ENCODE measurements at regions of chr4 and their contacts with region 1.

Region 1: DNA sequence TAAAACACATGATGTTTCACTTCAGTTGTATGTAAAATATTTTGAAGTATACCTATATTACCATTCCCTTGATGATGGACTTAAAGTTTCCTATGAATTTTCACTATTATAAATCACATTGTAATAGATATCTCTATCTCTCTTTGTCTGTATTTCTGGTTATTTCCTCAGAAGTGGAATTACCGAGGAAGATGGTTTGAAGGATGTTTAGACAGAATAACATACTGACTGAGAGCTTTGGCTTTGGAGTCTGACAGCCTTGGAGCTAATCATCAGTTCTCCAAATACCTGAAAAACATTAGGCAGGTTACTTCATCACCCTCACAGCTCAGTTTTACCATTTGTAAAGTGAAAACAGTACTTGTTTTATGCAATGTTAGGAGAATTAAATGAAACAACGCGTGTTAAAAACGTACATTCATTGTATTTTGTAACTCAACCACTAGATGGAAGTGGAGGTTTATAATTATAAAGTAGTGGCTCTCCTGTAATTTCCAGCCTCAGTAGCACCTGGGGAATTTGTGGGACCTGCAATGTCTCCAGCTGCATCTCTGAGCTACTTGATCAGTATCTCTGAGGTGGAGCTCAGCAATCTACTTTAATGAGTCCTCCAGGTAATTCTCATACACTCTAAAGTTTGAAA is 14.3 kb downstream of the JCHAIN start:
- DNase-seq: no peak
- ATAC-seq: peak; percentile 67
- H3K4me3 Mint-ChIP-seq: no peak overlapping the region
- H3K27ac Mint-ChIP-seq: no peak overlapping the region
- H3K4me1 Mint-ChIP-seq: peaks cover 5% of the 10 kb centered on the region
- H3K27me3 Mint-ChIP-seq: no peaks in the 10 kb centered on the region
- CTCF ChIP-seq: no peak

Region 2: GRCh38 chr4:70000711-70001110 is 651.3 kb before region 1 on chr4:
- CTCF ChIA-PET with region 1: no interaction called
- POLR2A ChIA-PET with region 1: no interaction called
- intact Hi-C with region 1: no loop called
- DNase-seq: no peak
- ATAC-seq: no peak
- H3K4me3 Mint-ChIP-seq: no peak overlapping the region
- H3K27ac Mint-ChIP-seq: no peak overlapping the region
- H3K4me1 Mint-ChIP-seq: no peaks in the 10 kb centered on the region
- H3K27me3 Mint-ChIP-seq: no peaks in the 10 kb centered on the region
- CTCF ChIP-seq: no peak

Region 3: DNA sequence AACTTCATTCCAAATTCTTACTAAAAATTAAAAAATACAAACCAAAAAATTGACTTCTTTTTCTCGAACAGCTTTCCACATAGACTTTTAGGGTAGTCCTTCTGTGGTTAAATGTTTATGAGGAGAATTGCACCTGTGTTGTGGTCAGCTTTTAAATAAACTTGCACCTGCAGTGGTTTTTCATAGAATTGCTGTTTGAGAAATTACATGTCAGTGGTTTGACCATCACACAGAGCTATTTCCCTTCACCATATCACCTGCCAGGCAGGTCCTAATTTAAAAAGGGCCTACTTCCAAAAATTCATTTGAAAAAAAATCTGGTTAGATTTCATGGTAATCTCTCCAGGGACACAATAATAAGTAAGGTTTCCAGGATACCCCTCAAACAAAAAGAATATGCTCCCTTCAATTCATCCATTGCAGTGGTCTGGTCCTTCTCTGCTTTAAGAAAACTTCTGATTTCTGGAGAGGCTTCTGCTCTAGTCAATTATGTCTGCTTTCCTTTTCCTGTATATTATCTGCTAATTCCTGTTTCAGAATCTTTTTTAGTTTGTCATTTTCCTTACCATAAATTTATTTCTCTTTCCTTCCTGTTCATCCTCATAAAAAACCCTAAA is 26.5 kb after region 1 on chr4:
- CTCF ChIA-PET with region 1: interaction called, 10 read pairs
- POLR2A ChIA-PET with region 1: interaction called, 5 read pairs
- intact Hi-C with region 1: no loop called
- DNase-seq: no peak
- ATAC-seq: no peak
- H3K4me3 Mint-ChIP-seq: no peak overlapping the region
- H3K27ac Mint-ChIP-seq: peak overlapping the region; percentile 53
- H3K4me1 Mint-ChIP-seq: peaks cover 56% of the 10 kb centered on the region
- H3K27me3 Mint-ChIP-seq: no peaks in the 10 kb centered on the region
- CTCF ChIP-seq: no peak

Region 4: GRCh38 chr4:70734168-70734954 is 82.4 kb after region 1 on chr4:
- CTCF ChIA-PET with region 1: interaction called, 9 read pairs
- POLR2A ChIA-PET with region 1: interaction called, 3 read pairs
- intact Hi-C with region 1: loop called (anchors 1 kb)
- DNase-seq: no peak
- ATAC-seq: peak; percentile 96
- H3K4me3 Mint-ChIP-seq: peak overlapping the region; percentile 78
- H3K27ac Mint-ChIP-seq: peak overlapping the region; percentile 85
- H3K4me1 Mint-ChIP-seq: peaks cover 52% of the 10 kb centered on the region
- H3K27me3 Mint-ChIP-seq: no peaks in the 10 kb centered on the region
- CTCF ChIP-seq: no peak

Region 5: DNA sequence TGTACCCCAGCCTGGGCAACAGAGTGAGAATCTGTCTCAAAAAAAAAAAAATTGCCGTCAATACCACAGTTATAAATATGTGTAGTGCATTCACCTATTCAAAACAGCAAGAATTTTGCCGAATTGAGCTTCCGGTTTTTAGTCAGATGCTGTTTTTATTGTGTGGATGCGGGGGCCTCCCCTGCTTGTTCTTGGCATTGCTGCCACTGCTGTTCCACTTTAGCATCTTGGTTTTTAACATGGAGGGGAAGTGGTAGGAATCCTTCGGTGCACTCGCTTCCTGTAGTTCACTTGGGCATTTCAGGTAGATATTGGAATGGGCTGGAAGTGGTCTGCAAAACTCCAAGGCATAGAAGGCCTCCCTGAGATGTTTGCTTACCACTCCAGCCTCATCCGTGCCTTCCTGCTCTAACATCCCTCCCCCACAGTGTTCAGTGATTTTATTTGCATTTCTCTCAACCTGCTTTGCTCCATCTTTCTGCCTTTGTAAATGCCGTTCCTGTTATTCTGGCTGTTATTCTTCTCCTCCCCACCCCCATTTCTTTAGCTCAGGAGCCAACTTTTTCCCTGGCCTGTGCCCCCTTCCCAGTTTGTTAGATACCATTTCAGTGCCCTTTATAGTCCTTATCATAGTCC is 275.6 kb after region 1 on chr4:
- CTCF ChIA-PET with region 1: no interaction called
- POLR2A ChIA-PET with region 1: no interaction called
- intact Hi-C with region 1: loop called (anchors 2 kb)
- DNase-seq: no peak
- ATAC-seq: peak; percentile 45
- H3K4me3 Mint-ChIP-seq: peak overlapping the region; percentile 33
- H3K27ac Mint-ChIP-seq: peak overlapping the region; percentile 68
- H3K4me1 Mint-ChIP-seq: peaks cover 51% of the 10 kb centered on the region
- H3K27me3 Mint-ChIP-seq: no peaks in the 10 kb centered on the region
- CTCF ChIP-seq: no peak

Region 6: DNA sequence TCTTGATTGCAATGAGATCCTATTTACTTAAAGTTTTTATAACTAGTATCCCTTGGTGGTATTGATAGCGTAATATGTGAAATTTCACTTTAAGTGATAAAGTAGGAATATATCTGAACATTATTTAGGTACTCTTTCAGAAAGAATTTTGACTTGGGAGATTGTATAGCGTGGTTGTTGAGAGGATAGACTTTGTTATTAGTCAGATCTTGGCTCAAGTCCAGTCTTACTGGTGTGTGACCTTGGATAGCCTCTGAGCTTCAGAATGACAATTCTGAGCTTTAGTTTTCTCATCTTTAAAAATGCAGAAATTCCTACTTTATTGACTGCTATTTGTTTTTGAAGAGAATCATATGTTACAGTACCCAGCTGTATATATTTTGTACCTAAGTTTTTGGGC is 374.1 kb after region 1 on chr4:
- CTCF ChIA-PET with region 1: interaction called, 3 read pairs
- POLR2A ChIA-PET with region 1: no interaction called
- intact Hi-C with region 1: loop called (anchors 2 kb)
- DNase-seq: no peak
- ATAC-seq: no peak
- H3K4me3 Mint-ChIP-seq: no peak overlapping the region
- H3K27ac Mint-ChIP-seq: peak overlapping the region; percentile 21
- H3K4me1 Mint-ChIP-seq: peaks cover 3% of the 10 kb centered on the region
- H3K27me3 Mint-ChIP-seq: no peaks in the 10 kb centered on the region
- CTCF ChIP-seq: no peak

Region 7: DNA sequence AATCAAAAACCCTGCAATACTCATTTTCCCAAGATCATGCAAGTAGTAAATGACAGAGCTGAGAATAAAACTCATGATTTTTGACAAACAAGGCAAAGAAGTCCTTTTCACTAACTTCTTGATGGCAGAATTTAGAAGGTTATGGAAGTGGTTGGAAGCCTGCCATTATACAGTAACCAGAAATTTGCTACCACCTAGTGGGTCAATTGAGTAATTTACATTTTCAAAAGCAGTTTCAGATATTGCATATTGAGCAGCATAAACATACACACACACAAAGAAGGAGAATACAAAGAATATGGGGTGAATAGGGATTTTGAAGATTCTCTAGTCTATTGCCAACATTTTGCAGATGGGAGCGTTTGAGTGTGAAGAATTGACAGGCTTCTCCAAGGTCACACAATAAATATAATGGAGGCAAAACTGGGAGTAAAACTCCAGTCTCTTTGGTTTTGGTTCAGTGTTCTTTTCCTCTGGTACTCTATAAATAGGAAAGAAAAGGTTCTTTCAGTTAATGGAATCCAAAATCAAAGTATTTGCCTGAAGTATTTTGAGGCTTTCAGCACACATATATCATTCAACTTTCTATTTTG is 1061.7 kb after region 1 on chr4:
- CTCF ChIA-PET with region 1: interaction called, 7 read pairs
- POLR2A ChIA-PET with region 1: no interaction called
- intact Hi-C with region 1: loop called (anchors 1 kb)
- DNase-seq: no peak
- ATAC-seq: no peak
- H3K4me3 Mint-ChIP-seq: no peak overlapping the region
- H3K27ac Mint-ChIP-seq: no peak overlapping the region
- H3K4me1 Mint-ChIP-seq: no peaks in the 10 kb centered on the region
- H3K27me3 Mint-ChIP-seq: no peaks in the 10 kb centered on the region
- CTCF ChIP-seq: no peak

Measured in activated B cell treated with CpG ODN at 0.5 μM for 24 hours (primary cell).